Calu3 (cell line): ENCODE measurements at regions of chr16 and their contacts with region 1.

Region 1: GRCh38 chr16:72264771-72265170 is 92.8 kb upstream of the PMFBP1 start:
- DNase-seq: no peak
- H3K4me3 Mint-ChIP-seq: no peak overlapping the region
- H3K27ac Mint-ChIP-seq: no peak overlapping the region
- H3K4me1 Mint-ChIP-seq: no peaks in the 10 kb centered on the region
- H3K27me3 Mint-ChIP-seq: no peaks in the 10 kb centered on the region
- CTCF ChIP-seq: no peak

Region 2: GRCh38 chr16:72124761-72125634 is 139.8 kb before region 1 on chr16:
- CTCF ChIA-PET with region 1: no interaction called
- intact Hi-C with region 1: no loop called
- DNase-seq: peak; percentile 84
- H3K4me3 Mint-ChIP-seq: no peak overlapping the region
- H3K27ac Mint-ChIP-seq: no peak overlapping the region
- H3K4me1 Mint-ChIP-seq: peaks cover 18% of the 10 kb centered on the region
- H3K27me3 Mint-ChIP-seq: no peaks in the 10 kb centered on the region
- CTCF ChIP-seq: peak; percentile 87

Region 3: GRCh38 chr16:72324578-72324977 is 59.8 kb after region 1 on chr16:
- CTCF ChIA-PET with region 1: no interaction called
- intact Hi-C with region 1: loop called (anchors 10 kb)
- DNase-seq: no peak
- H3K4me3 Mint-ChIP-seq: no peak overlapping the region
- H3K27ac Mint-ChIP-seq: no peak overlapping the region
- H3K4me1 Mint-ChIP-seq: no peaks in the 10 kb centered on the region
- H3K27me3 Mint-ChIP-seq: no peaks in the 10 kb centered on the region
- CTCF ChIP-seq: no peak